Activated CD4-positive, alpha-beta T cell treated with anti-CD3 and anti-CD28 coated beads, Interleukin-2, amount 10 ng/mL, durations not matched to agents 7 days and 5 days (primary cell): ENCODE measurements at regions of chr19 and their contacts with region 1.

Region 1: DNA sequence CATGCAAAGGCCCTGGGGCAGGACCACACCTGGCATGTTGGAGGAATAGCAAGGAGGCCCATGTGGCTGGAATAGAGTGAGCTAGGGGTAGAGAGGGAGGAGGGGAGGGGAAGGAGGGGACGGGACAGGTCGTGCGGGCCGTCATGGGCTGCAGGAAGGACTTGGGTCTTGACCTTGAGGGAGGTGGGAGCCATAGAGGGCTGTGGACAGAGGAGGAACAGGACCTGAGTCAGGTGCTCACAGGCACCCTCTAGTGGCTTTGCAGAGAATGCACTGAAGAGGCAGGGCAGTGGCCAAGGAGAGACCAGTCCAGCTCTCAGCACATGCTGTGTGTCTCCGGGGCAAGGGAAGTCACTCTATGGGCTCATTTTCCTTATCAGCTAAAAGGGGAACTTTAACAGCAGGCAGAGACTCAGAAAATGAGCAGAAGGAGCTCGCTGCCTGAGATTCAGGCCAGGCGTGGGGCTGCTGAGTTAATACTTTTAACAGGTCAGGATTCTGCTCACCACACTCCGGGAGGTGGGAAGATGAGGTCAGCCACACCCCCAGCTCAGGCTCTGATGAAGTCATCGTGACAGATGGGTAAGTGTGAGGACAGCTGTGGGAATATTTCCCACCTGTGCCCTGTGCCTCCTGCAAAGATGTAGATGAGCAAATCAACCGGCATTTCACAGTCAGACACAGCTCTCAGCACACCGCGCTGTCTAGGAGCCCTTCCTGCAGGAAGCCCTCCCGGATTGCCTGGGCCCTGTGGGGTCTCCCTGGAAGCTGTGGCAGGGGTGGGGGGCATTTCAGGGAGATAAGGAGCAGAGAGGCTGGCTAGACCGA is 6.0 kb upstream of the TNFAIP8L1 start:
- DNase-seq: peak; percentile 56
- H3K4me3 Mint-ChIP-seq: no peak overlapping the region
- H3K27ac Mint-ChIP-seq: no peak overlapping the region
- H3K4me1 Mint-ChIP-seq: peaks cover 24% of the 10 kb centered on the region
- H3K27me3 Mint-ChIP-seq: no peaks in the 10 kb centered on the region

Region 2: GRCh38 chr19:4568886-4569285 is 64.5 kb before region 1 on chr19:
- CTCF ChIA-PET with region 1: interaction called, 9 read pairs
- POLR2A ChIA-PET with region 1: interaction called, 11 read pairs
- DNase-seq: no peak
- H3K4me3 Mint-ChIP-seq: no peak overlapping the region
- H3K27ac Mint-ChIP-seq: no peak overlapping the region
- H3K4me1 Mint-ChIP-seq: no peaks in the 10 kb centered on the region
- H3K27me3 Mint-ChIP-seq: peaks cover 1% of the 10 kb centered on the region

Region 3: GRCh38 chr19:4660181-4660791 is 26.9 kb after region 1 on chr19:
- CTCF ChIA-PET with region 1: interaction called, 10 read pairs
- POLR2A ChIA-PET with region 1: no interaction called
- DNase-seq: peak; percentile 44
- H3K4me3 Mint-ChIP-seq: no peak overlapping the region
- H3K27ac Mint-ChIP-seq: no peak overlapping the region
- H3K4me1 Mint-ChIP-seq: peaks cover 9% of the 10 kb centered on the region
- H3K27me3 Mint-ChIP-seq: no peaks in the 10 kb centered on the region